ENCODE measurements at regions of chr4 and their contacts with region 1.

Region 1: DNA sequence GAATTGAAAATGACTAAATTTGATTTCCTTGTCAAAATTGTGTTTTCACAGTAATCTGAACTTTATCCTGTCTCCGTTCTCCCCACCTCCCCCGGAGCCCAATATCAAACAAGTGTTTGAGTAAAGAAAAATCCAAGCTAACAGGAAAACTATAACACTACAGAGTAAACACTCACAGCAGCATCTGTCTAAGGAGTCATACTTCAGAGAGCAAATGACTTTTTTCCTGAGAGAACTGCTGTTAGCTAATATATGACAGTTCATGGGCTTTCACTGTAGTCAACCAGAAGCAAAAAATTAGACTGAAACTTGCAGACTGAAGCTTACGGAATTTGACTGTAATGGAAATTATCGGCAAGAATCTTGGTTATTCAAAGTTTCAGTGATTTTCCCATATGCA is 321.7 kb downstream of the ANKRD50 start:
- DNase-seq: no peak
- ATAC-seq: no peak
- H3K4me3 ChIP-seq: no peak overlapping the region
- H3K4me3 Mint-ChIP-seq: no peak overlapping the region
- H3K27ac ChIP-seq: no peak overlapping the region
- H3K27ac Mint-ChIP-seq: no peak overlapping the region
- H3K4me1 ChIP-seq: no peaks in the 10 kb centered on the region
- H3K4me1 Mint-ChIP-seq: no peaks in the 10 kb centered on the region
- H3K27me3 ChIP-seq: no peaks in the 10 kb centered on the region
- H3K27me3 Mint-ChIP-seq: no peaks in the 10 kb centered on the region
- CTCF ChIP-seq: no peak

Region 2: GRCh38 chr4:123444290-123444731 is 946.5 kb before region 1 on chr4:
- CTCF ChIA-PET with region 1: no interaction called
- POLR2A ChIA-PET with region 1: no interaction called
- intact Hi-C with region 1: no loop called
- DNase-seq: peak in 5 of 14 experiments; percentile 8 to 46 (median 27)
- ATAC-seq: peak; percentile 79
- H3K4me3 ChIP-seq: no peak overlapping the region
- H3K4me3 Mint-ChIP-seq: peak overlapping the region; percentile 50
- H3K27ac ChIP-seq: no peak overlapping the region
- H3K27ac Mint-ChIP-seq: peak overlapping the region; percentile 18
- H3K4me1 ChIP-seq: peaks cover 10% of the 10 kb centered on the region
- H3K4me1 Mint-ChIP-seq: peaks cover 15% of the 10 kb centered on the region
- H3K27me3 ChIP-seq: no peaks in the 10 kb centered on the region
- H3K27me3 Mint-ChIP-seq: no peaks in the 10 kb centered on the region
- CTCF ChIP-seq: no peak

Region 3: GRCh38 chr4:124459941-124460310 is 69.1 kb after region 1 on chr4:
- CTCF ChIA-PET with region 1: no interaction called
- POLR2A ChIA-PET with region 1: no interaction called
- intact Hi-C with region 1: no loop called
- DNase-seq: no peak
- ATAC-seq: no peak
- H3K4me3 ChIP-seq: no peak overlapping the region
- H3K4me3 Mint-ChIP-seq: no peak overlapping the region
- H3K27ac ChIP-seq: no peak overlapping the region
- H3K27ac Mint-ChIP-seq: no peak overlapping the region
- H3K4me1 ChIP-seq: no peaks in the 10 kb centered on the region
- H3K4me1 Mint-ChIP-seq: no peaks in the 10 kb centered on the region
- H3K27me3 ChIP-seq: no peaks in the 10 kb centered on the region
- H3K27me3 Mint-ChIP-seq: no peaks in the 10 kb centered on the region
- CTCF ChIP-seq: no peak

Region 4: DNA sequence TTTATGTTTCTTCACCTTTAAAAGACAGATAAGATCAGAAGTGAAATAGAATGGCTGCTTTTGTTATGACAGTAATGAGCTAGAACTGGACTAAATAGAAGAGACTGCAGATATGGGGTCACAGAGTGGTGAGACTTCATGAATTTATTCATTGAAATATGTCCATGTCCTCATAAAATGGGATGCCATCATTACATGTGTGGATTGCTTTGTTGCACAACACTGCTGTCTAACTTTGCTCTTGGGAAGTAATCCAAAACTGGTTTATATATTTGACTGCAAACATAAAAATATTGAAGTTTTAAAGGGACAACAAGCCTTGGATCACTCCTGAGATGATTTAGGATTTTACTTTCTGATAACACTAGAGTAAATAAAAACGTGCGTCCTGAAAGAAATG is 714.7 kb after region 1 on chr4:
- CTCF ChIA-PET with region 1: no interaction called
- POLR2A ChIA-PET with region 1: no interaction called
- intact Hi-C with region 1: no loop called
- DNase-seq: no peak
- ATAC-seq: no peak
- H3K4me3 ChIP-seq: no peak overlapping the region
- H3K4me3 Mint-ChIP-seq: no peak overlapping the region
- H3K27ac ChIP-seq: no peak overlapping the region
- H3K27ac Mint-ChIP-seq: no peak overlapping the region
- H3K4me1 ChIP-seq: no peaks in the 10 kb centered on the region
- H3K4me1 Mint-ChIP-seq: no peaks in the 10 kb centered on the region
- H3K27me3 ChIP-seq: no peaks in the 10 kb centered on the region
- H3K27me3 Mint-ChIP-seq: no peaks in the 10 kb centered on the region
- CTCF ChIP-seq: no peak

Region 5: GRCh38 chr4:125389713-125390112 is 998.9 kb after region 1 on chr4:
- CTCF ChIA-PET with region 1: no interaction called
- POLR2A ChIA-PET with region 1: no interaction called
- intact Hi-C with region 1: no loop called
- DNase-seq: no peak
- ATAC-seq: no peak
- H3K4me3 ChIP-seq: no peak overlapping the region
- H3K4me3 Mint-ChIP-seq: no peak overlapping the region
- H3K27ac ChIP-seq: no peak overlapping the region
- H3K27ac Mint-ChIP-seq: no peak overlapping the region
- H3K4me1 ChIP-seq: no peaks in the 10 kb centered on the region
- H3K4me1 Mint-ChIP-seq: no peaks in the 10 kb centered on the region
- H3K27me3 ChIP-seq: no peaks in the 10 kb centered on the region
- H3K27me3 Mint-ChIP-seq: no peaks in the 10 kb centered on the region
- CTCF ChIP-seq: no peak

Region 6: GRCh38 chr4:126071346-126072333 is 1680.8 kb after region 1 on chr4:
- CTCF ChIA-PET with region 1: no interaction called
- POLR2A ChIA-PET with region 1: no interaction called
- intact Hi-C with region 1: loop called in 1 of 2 experiments (anchors 10 kb)
- DNase-seq: no peak
- ATAC-seq: no peak
- H3K4me3 ChIP-seq: no peak overlapping the region
- H3K4me3 Mint-ChIP-seq: no peak overlapping the region
- H3K27ac ChIP-seq: no peak overlapping the region
- H3K27ac Mint-ChIP-seq: no peak overlapping the region
- H3K4me1 ChIP-seq: no peaks in the 10 kb centered on the region
- H3K4me1 Mint-ChIP-seq: no peaks in the 10 kb centered on the region
- H3K27me3 ChIP-seq: no peaks in the 10 kb centered on the region
- H3K27me3 Mint-ChIP-seq: no peaks in the 10 kb centered on the region
- CTCF ChIP-seq: no peak

Measured in CD4-positive, alpha-beta T cell (primary cell).